ENCODE measurements at regions of chr17 and their contacts with region 1.

Region 1: GRCh38 chr17:36948717-36949460 is at the start of gene AATF:
- DNase-seq: peak; percentile 97
- ATAC-seq: peak; percentile 99
- H3K4me3 Mint-ChIP-seq: peak within 1 kb of the TSS; percentile 90
- H3K27ac Mint-ChIP-seq: peak within 1 kb of the TSS; percentile 94
- H3K4me1 Mint-ChIP-seq: peaks cover 47% of the 10 kb centered on the region
- H3K27me3 Mint-ChIP-seq: peaks cover 28% of the 10 kb centered on the region
- total RNA-seq, gene AATF: 87.9 to 149 TPM

Region 2: GRCh38 chr17:36486204-36487194 is 462.4 kb before region 1 on chr17 and contains the start of gene ZNHIT3:
- CTCF ChIA-PET with region 1: no interaction called
- POLR2A ChIA-PET with region 1: no interaction called
- intact Hi-C with region 1: loop called in 1 of 2 experiments (anchors 2 kb)
- DNase-seq: peak; percentile 95
- ATAC-seq: peak; percentile 94
- H3K4me3 Mint-ChIP-seq: peak within 1 kb of the TSS; percentile 84
- H3K27ac Mint-ChIP-seq: peak within 1 kb of the TSS; percentile 96
- H3K4me1 Mint-ChIP-seq: peaks cover 50% of the 10 kb centered on the region
- H3K27me3 Mint-ChIP-seq: peaks cover 10% of the 10 kb centered on the region
- total RNA-seq, gene ZNHIT3: 38.2 to 42.3 TPM

Region 3: GRCh38 chr17:36921095-36921851 is 27.6 kb before region 1 on chr17:
- CTCF ChIA-PET with region 1: interaction called, 3 read pairs
- POLR2A ChIA-PET with region 1: interaction called, 3 read pairs
- intact Hi-C with region 1: loop called in 1 of 2 experiments (anchors 1 kb)
- DNase-seq: peak; percentile 85
- ATAC-seq: peak; percentile 93
- H3K4me3 Mint-ChIP-seq: peak overlapping the region; percentile 24
- H3K27ac Mint-ChIP-seq: peak overlapping the region; percentile 85
- H3K4me1 Mint-ChIP-seq: peaks cover 20% of the 10 kb centered on the region
- H3K27me3 Mint-ChIP-seq: peaks cover 42% of the 10 kb centered on the region

Region 4: DNA sequence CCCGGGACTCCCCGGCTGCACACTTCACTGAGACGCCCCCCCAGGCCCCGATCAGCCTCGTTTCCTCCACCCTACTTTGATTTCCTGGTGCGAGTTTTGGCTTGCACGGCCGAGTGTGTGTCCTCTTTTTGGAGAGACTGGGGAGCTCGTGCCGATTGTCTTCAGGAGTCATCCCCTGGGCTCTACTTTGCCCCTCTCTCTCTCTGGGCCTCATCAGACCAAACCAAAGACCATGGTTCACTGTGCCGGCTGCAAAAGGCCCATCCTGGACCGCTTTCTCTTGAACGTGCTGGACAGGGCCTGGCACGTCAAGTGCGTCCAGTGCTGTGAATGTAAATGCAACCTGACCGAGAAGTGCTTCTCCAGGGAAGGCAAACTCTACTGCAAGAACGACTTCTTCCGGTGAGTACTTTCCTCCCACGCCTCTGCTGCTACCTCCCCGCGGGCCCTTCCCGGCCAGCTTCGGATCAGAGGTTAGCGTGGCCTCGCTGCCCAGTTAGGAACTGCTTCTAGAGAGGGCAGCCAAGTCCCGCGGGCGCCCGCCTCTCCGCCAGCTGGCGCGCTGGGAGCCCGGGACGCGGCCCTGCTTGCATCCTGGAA is 10.8 kb before region 1 on chr17:
- CTCF ChIA-PET with region 1: interaction called, 5 read pairs
- POLR2A ChIA-PET with region 1: interaction called, 8 read pairs
- intact Hi-C with region 1: loop called (anchors 1 kb)
- DNase-seq: peak; percentile 60
- ATAC-seq: peak; percentile 44
- H3K4me3 Mint-ChIP-seq: peak overlapping the region; percentile 60
- H3K27ac Mint-ChIP-seq: peak overlapping the region; percentile 60
- H3K4me1 Mint-ChIP-seq: peaks cover 65% of the 10 kb centered on the region
- H3K27me3 Mint-ChIP-seq: peaks cover 75% of the 10 kb centered on the region

Region 5: GRCh38 chr17:37047631-37048104 is 98.8 kb after region 1 on chr17:
- CTCF ChIA-PET with region 1: interaction called, 4 read pairs
- POLR2A ChIA-PET with region 1: no interaction called
- intact Hi-C with region 1: loop called in 1 of 2 experiments (anchors 5 kb)
- DNase-seq: peak; percentile 92
- ATAC-seq: peak; percentile 91
- H3K4me3 Mint-ChIP-seq: no peak overlapping the region
- H3K27ac Mint-ChIP-seq: no peak overlapping the region
- H3K4me1 Mint-ChIP-seq: peaks cover 12% of the 10 kb centered on the region
- H3K27me3 Mint-ChIP-seq: no peaks in the 10 kb centered on the region

Region 6: DNA sequence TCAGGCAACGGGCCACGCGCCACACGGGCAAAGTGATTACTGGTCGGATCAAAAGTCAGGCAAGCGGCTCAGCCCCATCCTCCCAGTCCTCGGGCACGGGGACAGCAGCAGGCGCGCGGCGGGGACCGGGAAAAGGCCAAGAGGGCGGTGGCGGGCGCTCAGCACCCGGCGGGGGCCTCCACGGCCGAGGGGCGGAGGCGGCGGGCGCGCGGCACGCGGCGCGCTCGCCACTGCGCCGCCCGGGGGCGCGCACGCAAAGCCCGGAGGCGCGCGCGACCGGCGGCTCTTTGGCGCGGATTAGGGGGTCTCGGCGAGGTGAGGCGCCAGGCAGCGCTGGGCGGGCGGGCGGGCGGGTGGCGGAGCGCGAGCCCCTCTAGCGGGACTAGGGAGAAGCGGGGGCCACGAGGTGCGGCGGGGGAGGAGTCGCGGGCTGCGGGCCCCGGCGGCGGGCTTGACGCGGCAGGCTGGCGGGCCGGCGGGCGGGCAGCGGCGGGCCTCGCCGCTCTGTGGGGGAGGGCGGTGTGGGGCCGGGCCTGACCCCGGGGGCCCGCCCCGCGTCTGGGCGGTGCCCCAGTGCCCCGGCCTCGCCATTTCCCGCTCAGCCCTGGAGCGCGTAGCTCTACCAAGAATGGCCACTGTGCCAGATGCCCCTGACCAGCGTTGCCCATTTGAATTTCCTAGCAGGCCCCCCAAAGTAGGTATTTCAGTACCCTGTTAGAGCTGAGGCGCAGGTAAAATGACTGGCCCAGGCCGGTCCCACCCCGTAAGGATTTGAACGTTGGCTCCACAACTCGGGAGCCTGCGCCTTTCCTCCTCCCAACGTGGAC is 458.0 kb after region 1 on chr17 and contains the starts of genes ACACA and TADA2A:
- CTCF ChIA-PET with region 1: no interaction called
- POLR2A ChIA-PET with region 1: no interaction called
- intact Hi-C with region 1: loop called in 1 of 2 experiments (anchors 2 kb)
- DNase-seq: peak; percentile 88
- ATAC-seq: peak; percentile 93
- H3K4me3 Mint-ChIP-seq: peak within 1 kb of the TSS; percentile 99
- H3K27ac Mint-ChIP-seq: peak within 1 kb of the TSS; percentile 98
- H3K4me1 Mint-ChIP-seq: peaks cover 46% of the 10 kb centered on the region
- H3K27me3 Mint-ChIP-seq: no peaks in the 10 kb centered on the region
- total RNA-seq, gene ACACA: 57.2 to 61.1 TPM
- total RNA-seq, gene TADA2A: 29.9 to 32.9 TPM

Measured in activated CD4-positive, alpha-beta T cell treated with anti-CD3 and anti-CD28 coated beads for 36 hours (primary cell).